Head of caudate nucleus (tissue), 42 donors: ENCODE measurements at regions of chr2 and their contacts with region 1.

Region 1: GRCh38 chr2:165698444-165698894 is 95.6 kb downstream of the GALNT3 start:
- DNase-seq: peak in 38 of 42 donors; percentile 12 to 75 (median 52)

Region 2: DNA sequence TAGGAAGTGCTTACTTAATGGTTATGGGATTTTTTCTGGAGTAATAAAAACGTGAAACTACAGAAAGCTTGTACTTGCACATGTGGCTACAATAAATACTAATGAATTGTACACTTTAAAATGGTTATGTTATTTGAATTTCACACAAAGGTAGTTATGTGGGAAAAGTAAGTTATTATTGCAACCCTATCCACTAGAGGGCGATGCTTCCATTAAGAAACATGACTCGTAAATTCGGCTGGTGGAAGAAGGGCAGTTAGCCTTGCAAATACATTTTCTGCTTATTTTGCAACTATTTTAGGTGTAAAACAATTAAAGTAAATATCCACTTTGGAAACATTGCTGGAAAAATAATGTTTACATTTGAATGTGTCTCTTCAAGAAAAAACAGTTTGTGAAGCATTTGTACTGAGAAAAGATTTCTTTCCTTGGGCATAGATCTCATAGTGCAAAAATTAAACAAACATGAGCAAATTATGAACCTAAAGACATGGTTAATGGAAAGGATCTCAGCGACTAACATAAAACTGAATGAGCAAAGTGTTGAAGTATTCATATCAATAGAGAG is 297.1 kb before region 1 on chr2:
- intact Hi-C with region 1: loop called (anchors 10 kb)
- DNase-seq: peak in 16 of 42 donors; percentile 13 to 70 (median 38)

Region 3: DNA sequence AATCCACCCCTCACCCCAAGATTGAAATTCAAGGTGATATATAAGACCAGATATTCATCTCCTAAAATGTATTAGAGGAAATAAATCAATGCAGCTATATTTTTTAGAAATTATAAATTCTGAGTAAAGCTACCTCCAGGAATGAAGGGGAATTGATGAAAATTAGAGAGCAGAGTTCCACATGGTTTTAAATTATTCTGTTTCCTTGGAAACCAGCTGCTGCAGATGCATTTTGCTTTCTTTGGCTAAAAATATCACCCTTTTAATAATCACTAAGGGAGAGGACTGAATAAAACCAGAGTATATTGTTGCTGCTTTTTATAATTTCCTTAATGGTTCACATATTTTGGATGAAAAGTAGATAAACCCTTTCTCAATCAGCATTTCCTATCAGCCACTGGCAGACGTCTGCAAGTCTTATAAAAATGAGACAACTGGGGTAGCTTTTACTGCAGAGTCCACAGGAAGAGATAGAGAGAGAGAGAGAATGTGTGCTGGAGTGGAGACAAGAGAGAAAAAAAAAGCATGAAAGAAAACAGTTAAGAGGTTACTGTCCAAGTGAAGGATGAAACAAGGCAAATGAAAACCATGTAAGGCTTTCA is 227.0 kb before region 1 on chr2:
- intact Hi-C with region 1: loop called (anchors 10 kb)
- DNase-seq: no peak

Region 4: GRCh38 chr2:165563468-165564225 is 134.8 kb before region 1 on chr2:
- intact Hi-C with region 1: loop called (anchors 5 kb)
- DNase-seq: no peak